ENCODE measurements at regions of chr20 and their contacts with region 1.

Region 1: GRCh38 chr20:49330544-49331239 is 52.8 kb upstream of the ZNFX1 start:
- DNase-seq: no peak
- ATAC-seq: no peak
- H3K4me3 ChIP-seq: no peak overlapping the region
- H3K27ac ChIP-seq: no peak overlapping the region
- H3K4me1 ChIP-seq: no peaks in the 10 kb centered on the region
- H3K27me3 ChIP-seq: peaks cover 0 to 5% of the 10 kb centered on the region in 2 donors
- CTCF ChIP-seq: no peak
- POLR2A ChIP-seq: no peak

Region 2: DNA sequence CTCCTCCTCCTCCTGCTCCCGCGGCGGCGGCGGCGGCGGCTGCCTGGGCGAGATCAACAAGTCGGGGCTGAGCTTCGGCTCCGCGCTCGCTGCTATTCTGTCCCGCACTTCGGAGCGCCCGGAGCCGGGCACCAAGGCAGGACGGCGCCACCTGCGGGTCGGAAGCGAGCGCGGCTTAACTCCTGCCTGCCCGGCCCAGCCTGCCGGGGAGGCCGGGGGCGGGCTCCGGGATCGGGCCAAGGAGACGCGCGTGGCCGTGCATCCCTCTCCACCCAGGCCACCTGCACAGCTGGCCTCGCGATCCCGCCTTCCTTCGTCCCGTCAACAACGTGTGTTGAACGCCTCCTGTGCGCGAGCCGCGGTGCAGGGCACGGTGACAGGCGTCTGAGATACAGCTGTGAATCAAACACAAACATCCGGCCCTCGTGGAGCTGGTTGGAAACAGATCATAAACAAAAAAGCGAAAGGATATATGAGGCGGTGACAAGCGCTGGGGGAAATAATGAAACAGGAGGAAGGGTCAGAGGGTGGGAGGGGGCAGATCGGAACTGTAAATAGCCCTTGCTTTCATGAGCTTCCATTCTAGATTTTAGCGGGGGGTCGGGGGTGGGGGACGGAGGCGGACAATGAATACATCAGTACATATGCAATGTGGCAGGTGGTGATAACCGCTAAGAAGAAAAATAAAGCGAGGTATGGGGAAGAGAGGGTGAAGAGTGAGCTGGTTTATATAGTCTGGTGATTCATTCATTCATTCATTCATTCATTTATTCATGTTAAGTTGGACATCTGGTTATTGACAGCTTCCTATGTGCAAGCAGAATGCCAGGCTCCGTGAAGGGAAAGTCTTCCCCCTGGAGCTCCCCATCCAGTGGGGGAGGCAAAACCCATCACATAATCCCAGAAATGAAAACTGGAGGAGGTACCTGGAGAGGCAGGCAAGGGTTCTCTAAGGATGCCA is 153.8 kb after region 1 on chr20:
- intact Hi-C with region 1: loop called in 1 of 2 experiments (anchors 5 kb)
- DNase-seq: peak; percentile 85 to 87 (median 87)
- ATAC-seq: peak; percentile 72 to 88 (median 82)
- H3K4me3 ChIP-seq: peak overlapping the region; percentile 36 to 52 (median 40)
- H3K27ac ChIP-seq: no peak overlapping the region
- H3K4me1 ChIP-seq: peaks cover 0 to 36% (median 9%) of the 10 kb centered on the region in 4 donors
- H3K27me3 ChIP-seq: no peaks in the 10 kb centered on the region
- CTCF ChIP-seq: peak; percentile 70 to 89 (median 80)
- POLR2A ChIP-seq: no peak

Region 3: GRCh38 chr20:49508435-49509199 is 177.9 kb after region 1 on chr20:
- intact Hi-C with region 1: loop called (anchors 5 kb)
- DNase-seq: no peak
- ATAC-seq: peak; percentile 44 to 67 (median 60)
- H3K4me3 ChIP-seq: no peak overlapping the region
- H3K27ac ChIP-seq: no peak overlapping the region
- H3K4me1 ChIP-seq: no peaks in the 10 kb centered on the region
- H3K27me3 ChIP-seq: no peaks in the 10 kb centered on the region
- CTCF ChIP-seq: peak; percentile 56 to 62 (median 60)
- POLR2A ChIP-seq: no peak

Measured in right lobe of liver (tissue), 6 donors.